ENCODE measurements at regions of chr3 and their contacts with region 1.

Region 1: GRCh38 chr3:71583566-71584449 is at the start of gene FOXP1:
- DNase-seq: peak; percentile 37
- H3K4me3 Mint-ChIP-seq: peak within 1 kb of the TSS; percentile 90
- H3K27ac Mint-ChIP-seq: peak within 1 kb of the TSS; percentile 93
- H3K4me1 Mint-ChIP-seq: peaks cover 47% of the 10 kb centered on the region
- H3K27me3 Mint-ChIP-seq: peaks cover 31% of the 10 kb centered on the region
- total RNA-seq, gene FOXP1: 94.8 and 97.6 TPM in 2 replicates

Region 2: GRCh38 chr3:70531063-70531657 is 1052.6 kb before region 1 on chr3:
- intact Hi-C with region 1: loop called (anchors 5 kb)
- DNase-seq: no peak
- H3K4me3 Mint-ChIP-seq: no peak overlapping the region
- H3K27ac Mint-ChIP-seq: no peak overlapping the region
- H3K4me1 Mint-ChIP-seq: no peaks in the 10 kb centered on the region
- H3K27me3 Mint-ChIP-seq: peaks cover 5% of the 10 kb centered on the region

Region 3: DNA sequence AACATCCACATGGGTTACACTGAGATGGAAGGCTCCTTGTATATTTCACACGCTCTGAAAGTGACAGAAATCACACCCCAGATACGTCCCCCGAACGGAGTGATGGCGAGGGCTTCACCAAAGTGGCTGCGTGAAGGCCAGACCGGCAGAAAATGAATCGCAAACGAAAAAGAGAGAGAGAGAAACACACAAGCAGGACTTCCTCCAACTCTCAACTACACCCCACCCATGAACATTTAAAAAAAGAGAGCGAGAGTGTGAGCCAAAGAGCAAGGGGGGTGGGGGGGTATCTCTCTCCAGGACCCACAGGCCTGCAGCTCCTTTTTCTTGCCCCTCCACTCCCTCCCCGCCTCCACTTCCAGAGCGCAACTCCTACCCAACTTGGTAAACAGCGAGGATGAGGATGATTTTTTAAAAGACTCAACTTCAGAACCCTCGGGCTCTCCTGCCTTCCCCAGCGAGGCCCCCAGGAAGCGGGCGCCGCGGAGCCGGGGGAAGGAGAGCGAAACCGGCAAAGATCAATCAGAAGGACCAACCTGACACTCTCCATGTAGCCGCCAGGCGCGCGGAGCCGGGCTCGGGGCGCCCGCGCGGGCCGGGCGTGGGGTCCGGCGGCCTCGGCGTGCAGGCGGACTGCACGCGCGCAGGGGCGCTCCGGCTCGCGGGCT is 519.4 kb before region 1 on chr3:
- intact Hi-C with region 1: loop called (anchors 1 kb)
- DNase-seq: peak; percentile 59
- H3K4me3 Mint-ChIP-seq: no peak overlapping the region
- H3K27ac Mint-ChIP-seq: no peak overlapping the region
- H3K4me1 Mint-ChIP-seq: peaks cover 39% of the 10 kb centered on the region
- H3K27me3 Mint-ChIP-seq: no peaks in the 10 kb centered on the region

Region 4: GRCh38 chr3:71185733-71186455 is 397.9 kb before region 1 on chr3:
- intact Hi-C with region 1: loop called (anchors 5 kb)
- DNase-seq: no peak
- H3K4me3 Mint-ChIP-seq: no peak overlapping the region
- H3K27ac Mint-ChIP-seq: no peak overlapping the region
- H3K4me1 Mint-ChIP-seq: peaks cover 15% of the 10 kb centered on the region
- H3K27me3 Mint-ChIP-seq: peaks cover 2% of the 10 kb centered on the region

Region 5: DNA sequence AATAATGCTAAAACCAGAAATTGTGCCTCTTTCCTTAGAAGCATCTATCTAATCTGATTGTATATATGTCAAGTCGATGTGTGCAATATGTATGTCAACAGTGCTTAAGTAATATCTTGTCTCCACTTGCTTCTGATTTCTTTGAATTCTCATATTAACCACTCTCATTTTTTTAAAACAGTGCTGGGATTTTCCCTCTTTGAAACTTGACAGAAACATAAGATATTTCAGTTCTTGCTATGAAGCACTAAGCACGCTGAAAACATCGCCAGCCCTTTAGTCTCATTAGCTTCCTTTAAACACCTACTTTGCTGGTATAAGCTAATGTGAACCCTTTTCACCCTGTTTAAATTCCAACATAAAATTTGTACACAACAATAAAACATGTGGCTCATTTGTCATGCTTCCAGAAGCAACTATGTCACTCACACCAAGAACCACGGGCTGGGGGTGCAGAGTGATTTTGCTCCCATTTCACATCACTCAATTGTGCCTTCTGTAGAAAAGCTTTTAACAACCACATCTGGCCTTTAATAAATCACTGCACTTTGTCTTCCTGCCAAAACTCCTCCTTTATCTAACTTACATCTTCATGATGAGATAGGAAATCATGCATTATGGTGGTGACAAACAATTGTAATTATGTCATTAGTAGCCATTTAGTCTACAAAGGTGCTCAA is 185.5 kb before region 1 on chr3:
- intact Hi-C with region 1: loop called (anchors 2 kb)
- DNase-seq: no peak
- H3K4me3 Mint-ChIP-seq: no peak overlapping the region
- H3K27ac Mint-ChIP-seq: no peak overlapping the region
- H3K4me1 Mint-ChIP-seq: peaks cover 17% of the 10 kb centered on the region
- H3K27me3 Mint-ChIP-seq: peaks cover 43% of the 10 kb centered on the region

Region 6: DNA sequence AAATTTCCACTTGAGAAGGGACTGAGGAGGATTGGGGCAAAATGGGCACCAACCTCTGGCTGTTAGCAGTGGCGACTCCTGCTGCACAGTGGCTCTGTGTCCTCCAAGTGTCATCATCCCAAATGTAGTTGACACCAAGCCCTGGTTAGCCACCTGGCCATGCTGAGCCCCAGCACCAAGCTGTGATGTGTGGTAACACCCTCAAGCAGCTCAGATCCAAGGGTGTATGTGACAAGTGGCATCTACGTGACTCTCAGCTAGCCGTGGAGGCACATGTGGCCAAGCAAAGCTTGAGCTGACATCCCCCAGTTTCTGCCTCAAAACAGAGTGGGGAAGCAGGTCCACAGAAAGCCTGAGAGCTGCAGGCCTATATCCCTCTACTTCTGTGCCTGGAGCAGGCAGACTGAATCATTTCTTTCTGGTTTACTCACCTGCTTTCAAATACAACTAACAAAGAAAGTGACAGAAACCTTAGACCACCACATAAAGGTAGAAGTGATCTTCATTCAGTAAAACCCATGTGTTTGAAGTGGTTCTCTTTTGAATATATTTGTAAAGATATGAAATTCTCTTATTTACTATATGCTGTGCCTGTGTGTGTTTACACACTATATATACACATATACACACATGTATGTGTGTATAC is 40.3 kb before region 1 on chr3:
- intact Hi-C with region 1: loop called (anchors 2 kb)
- DNase-seq: no peak
- H3K4me3 Mint-ChIP-seq: no peak overlapping the region
- H3K27ac Mint-ChIP-seq: no peak overlapping the region
- H3K4me1 Mint-ChIP-seq: no peaks in the 10 kb centered on the region
- H3K27me3 Mint-ChIP-seq: peaks cover 17% of the 10 kb centered on the region

Region 7: DNA sequence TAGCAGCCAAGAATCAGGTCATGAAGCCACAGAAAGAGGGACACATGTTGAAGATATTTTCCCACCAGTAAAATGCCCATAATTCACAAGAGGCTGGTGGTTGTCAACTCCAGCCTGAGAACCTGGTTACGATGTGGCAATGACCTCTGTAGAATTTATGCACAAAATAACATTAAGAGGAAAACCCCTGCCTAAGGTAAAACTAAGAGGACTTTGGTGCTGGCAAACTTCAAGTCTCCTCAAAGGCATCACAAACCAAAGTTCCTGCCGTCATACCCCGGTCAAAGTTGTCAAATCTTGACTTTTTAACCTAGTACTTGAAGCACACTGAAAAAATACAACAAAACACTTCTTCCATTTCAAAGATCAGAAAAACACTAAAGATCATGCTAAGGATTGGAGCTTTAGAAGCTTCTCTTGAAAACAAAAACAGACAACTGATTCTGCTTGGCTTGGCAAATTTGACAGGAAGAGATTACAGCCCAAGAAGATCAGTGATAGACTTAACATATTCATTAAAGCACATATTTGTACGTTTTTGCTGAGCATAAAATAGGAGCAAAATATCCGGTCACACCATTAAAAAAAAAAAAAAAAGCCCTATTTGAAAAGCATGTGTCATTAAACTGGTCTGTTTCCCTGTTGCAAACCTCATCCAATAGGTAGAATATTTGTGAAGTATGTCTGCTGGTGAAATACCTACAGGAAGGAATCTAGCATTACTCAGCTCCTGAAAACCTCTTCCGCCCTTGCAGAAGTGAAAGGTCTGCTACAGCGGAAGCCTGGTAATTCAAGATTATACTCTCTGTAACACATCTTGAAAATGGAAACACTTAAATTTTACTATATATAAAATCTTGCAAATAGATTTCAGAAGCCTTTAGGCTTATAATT is 118.6 kb after region 1 on chr3:
- intact Hi-C with region 1: no loop called
- DNase-seq: peak; percentile 38
- H3K4me3 Mint-ChIP-seq: peak overlapping the region; percentile 66
- H3K27ac Mint-ChIP-seq: peak overlapping the region; percentile 93
- H3K4me1 Mint-ChIP-seq: peaks cover 61% of the 10 kb centered on the region
- H3K27me3 Mint-ChIP-seq: no peaks in the 10 kb centered on the region